PC-3 (cell line): ENCODE measurements at regions of chr6 and their contacts with region 1.

Region 1: DNA sequence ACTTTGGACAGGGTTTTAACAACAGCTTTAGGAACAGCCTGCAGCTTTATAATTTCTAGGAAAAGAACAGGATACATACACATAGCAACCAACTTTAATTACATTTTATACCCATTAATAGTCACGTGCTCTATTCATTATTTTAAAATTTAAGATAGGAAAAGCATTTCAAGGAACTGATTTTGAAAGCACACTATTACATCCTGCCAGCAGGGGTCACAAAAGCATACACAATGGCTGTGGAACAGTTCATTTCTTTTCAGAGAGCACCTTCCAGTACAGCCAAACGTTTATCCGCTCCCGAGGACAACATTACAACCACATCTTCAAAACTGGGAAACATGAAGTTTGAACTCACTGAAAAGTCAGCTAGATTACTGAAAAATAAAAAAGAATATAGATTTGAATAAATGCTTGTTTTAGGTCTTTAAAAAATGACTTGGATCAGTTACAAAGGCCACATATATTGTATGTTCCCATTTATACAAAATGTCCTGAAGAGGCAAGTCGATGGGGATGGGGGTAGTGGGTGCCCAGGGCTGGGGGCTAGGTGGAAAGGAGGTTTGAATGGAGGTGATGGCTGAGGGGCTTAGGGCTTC is 104.6 kb upstream of the EXOC2 start:
- DNase-seq: peak; percentile 66
- ATAC-seq: peak; percentile 70
- H3K4me3 ChIP-seq: no peak overlapping the region
- H3K27ac ChIP-seq: no peak overlapping the region
- H3K4me1 ChIP-seq: no peaks in the 10 kb centered on the region
- H3K27me3 ChIP-seq: peaks cover 87% of the 10 kb centered on the region
- CTCF ChIP-seq: peak; percentile 85

Region 2: GRCh38 chr6:1381481-1382330 is 584.1 kb after region 1 on chr6:
- CTCF ChIA-PET with region 1: interaction called, 5 read pairs
- POLR2A ChIA-PET with region 1: no interaction called
- intact Hi-C with region 1: loop called (anchors 1 kb)
- DNase-seq: peak; percentile 68
- ATAC-seq: peak; percentile 84
- H3K4me3 ChIP-seq: peak overlapping the region; percentile 62; the same call in 1 of the 2 replicates
- H3K27ac ChIP-seq: no peak overlapping the region
- H3K4me1 ChIP-seq: no peaks in the 10 kb centered on the region
- H3K27me3 ChIP-seq: peaks cover 86% of the 10 kb centered on the region
- CTCF ChIP-seq: peak; percentile 78

Region 3: GRCh38 chr6:1436334-1437306 is 639.0 kb after region 1 on chr6:
- CTCF ChIA-PET with region 1: no interaction called
- POLR2A ChIA-PET with region 1: no interaction called
- intact Hi-C with region 1: loop called (anchors 2 kb)
- DNase-seq: peak; percentile 92
- ATAC-seq: peak; percentile 93
- H3K4me3 ChIP-seq: no peak overlapping the region; the same call in 1 of the 2 replicates
- H3K27ac ChIP-seq: no peak overlapping the region
- H3K4me1 ChIP-seq: peaks cover 4% of the 10 kb centered on the region; the same call in 1 of the 2 replicates
- H3K27me3 ChIP-seq: peaks cover 19% of the 10 kb centered on the region
- CTCF ChIP-seq: peak; percentile 88